Endothelial cell of umbilical vein (primary cell): ENCODE measurements at regions of chr2 and their contacts with region 1.

Region 1: DNA sequence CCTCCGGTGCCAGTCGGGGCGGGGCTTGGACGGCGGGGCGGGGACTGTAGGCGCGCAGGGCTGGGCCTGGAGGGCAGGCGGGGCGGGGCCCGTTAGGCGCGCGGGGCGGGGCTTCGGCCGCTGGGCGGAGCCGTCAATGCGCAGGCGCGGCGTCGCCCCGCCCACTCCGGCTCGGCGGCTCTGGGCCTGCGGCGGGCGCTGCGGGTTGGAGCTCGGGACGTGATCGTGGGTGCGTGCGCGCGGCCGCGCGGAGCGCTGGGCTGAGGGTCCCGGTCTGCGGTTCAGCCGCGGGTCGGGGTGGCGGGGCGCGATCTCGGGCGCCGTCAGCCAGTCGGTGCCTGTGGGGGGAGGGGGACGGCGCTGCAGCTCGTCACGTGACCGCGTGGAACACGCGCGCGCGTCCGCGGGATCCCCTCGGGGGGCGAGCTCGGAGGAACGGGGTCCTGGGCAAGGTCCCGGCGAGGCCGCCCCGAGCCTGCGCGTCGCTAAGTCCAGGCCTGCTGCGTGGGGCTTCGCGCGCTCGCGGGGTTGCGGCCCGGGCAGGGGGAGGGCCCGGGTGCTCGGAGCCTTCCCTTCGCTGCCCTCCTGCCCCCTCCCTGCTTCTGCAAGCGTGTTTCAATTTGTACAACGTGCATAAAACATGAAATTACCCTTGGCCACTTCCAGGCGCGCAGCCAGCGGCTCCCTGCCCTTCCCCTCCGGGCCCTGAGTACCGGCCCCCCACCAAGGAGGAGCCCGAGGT is at the start of gene D2HGDH:
- DNase-seq: peak; percentile 78
- H3K4me3 ChIP-seq: peak within 1 kb of the TSS; percentile 50 to 87 (median 60)
- H3K27ac ChIP-seq: peak within 1 kb of the TSS; percentile 41
- H3K4me1 ChIP-seq: peaks cover 15% of the 10 kb centered on the region
- H3K27me3 ChIP-seq: no peaks in the 10 kb centered on the region
- CTCF ChIP-seq: no peak
- POLR2A ChIP-seq: peak; percentile 98
- total RNA-seq, gene D2HGDH: 22.3 and 27.9 TPM in 2 replicates

Region 2: DNA sequence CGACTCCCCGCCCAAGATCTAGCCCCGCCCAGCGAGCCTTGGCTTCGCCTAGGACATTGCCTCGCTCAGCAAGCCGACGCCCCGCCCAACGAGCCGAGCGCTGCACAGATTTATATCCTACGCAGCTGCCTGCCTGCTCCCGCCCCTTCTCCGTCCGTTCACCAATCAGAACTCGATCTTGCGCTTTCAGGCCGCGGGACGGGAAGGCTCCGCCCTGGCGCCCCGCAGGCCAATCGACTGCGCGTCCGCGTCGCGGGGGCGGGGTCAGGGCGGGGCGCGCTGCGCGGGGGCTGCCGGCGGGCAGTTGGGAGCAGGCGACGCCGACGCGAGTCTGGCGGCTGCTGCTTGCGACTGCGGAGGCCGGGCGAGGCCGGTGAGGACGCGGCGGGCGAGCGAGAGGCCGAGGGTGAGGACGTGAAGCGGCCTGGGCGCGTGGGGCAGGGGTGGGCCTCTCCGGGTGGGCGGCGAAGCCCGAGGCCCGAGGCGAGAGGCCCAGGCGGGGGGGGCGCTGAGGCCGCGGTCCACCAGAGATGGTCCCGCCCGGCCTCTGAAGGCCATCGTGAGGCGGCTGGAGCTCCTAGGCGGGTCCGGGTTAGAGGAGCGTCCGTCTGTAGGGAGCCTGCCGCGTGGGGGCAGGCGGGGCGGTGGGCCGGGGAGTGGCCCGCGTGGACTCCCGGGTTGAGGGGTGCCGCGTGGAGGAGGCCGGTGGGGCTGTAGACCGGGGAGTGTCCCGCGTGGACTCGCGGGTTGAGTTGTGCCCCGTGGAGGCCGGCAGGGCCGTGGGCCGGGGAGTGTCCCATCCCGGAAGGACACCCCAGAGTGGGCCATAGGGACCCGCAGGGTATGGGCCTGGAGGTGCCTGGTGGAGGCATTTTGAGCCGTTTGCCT is 378.4 kb before region 1 on chr2 and contains the start of gene FARP2:
- CTCF ChIA-PET with region 1: no interaction called
- POLR2A ChIA-PET with region 1: no interaction called
- dilution Hi-C with region 1: no loop called
- intact Hi-C with region 1: loop called (anchors 5 kb)
- DNase-seq: peak; percentile 99
- H3K4me3 ChIP-seq: peak within 1 kb of the TSS; percentile 48 to 91 (median 62)
- H3K27ac ChIP-seq: peak within 1 kb of the TSS; percentile 33
- H3K4me1 ChIP-seq: peaks cover 21% of the 10 kb centered on the region
- H3K27me3 ChIP-seq: no peaks in the 10 kb centered on the region
- CTCF ChIP-seq: no peak
- POLR2A ChIP-seq: peak; percentile 89
- total RNA-seq, gene FARP2: 40.6 and 45.3 TPM in 2 replicates

Region 3: DNA sequence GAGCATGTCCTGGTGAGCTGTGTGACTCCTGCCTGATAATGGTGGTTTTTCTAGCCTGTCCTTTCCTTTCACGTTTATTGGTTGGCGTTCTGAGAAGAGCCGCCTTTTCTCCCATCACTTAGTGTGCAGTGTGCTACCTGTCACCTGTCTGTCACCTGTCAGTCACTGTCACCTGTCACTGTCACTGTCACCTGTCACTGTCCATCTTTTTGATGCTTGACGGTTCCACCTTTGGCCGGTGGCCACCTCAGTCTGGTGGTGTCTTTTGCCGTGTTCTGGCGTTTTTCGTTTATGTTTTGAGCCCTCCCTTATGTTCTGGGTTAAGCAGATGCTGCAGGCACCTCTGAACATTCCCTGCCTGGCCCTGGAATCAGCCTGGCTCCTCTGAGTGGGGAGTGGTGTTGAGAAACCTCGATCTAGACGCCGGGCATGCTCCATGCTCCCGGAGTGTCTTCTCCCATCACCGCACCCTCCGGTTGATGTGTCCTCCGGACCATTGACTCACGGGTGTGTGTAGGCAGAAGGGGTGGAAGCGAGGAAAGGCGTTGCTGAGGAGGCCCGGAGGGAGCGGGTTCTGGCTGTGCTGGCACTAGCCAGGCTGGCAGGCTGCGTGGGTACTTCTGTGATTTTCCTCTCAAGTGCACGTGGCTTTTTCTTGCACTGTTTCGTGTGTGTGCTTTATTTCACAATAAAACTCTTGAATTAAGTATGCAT is 68.8 kb before region 1 on chr2:
- CTCF ChIA-PET with region 1: interaction called, 4 read pairs
- POLR2A ChIA-PET with region 1: no interaction called
- dilution Hi-C with region 1: no loop called
- intact Hi-C with region 1: loop called (anchors 1 kb)
- DNase-seq: no peak
- H3K4me3 ChIP-seq: no peak overlapping the region
- H3K27ac ChIP-seq: peak overlapping the region; percentile 21
- H3K4me1 ChIP-seq: peaks cover 20% of the 10 kb centered on the region
- H3K27me3 ChIP-seq: no peaks in the 10 kb centered on the region
- CTCF ChIP-seq: no peak
- POLR2A ChIP-seq: no peak

Region 4: DNA sequence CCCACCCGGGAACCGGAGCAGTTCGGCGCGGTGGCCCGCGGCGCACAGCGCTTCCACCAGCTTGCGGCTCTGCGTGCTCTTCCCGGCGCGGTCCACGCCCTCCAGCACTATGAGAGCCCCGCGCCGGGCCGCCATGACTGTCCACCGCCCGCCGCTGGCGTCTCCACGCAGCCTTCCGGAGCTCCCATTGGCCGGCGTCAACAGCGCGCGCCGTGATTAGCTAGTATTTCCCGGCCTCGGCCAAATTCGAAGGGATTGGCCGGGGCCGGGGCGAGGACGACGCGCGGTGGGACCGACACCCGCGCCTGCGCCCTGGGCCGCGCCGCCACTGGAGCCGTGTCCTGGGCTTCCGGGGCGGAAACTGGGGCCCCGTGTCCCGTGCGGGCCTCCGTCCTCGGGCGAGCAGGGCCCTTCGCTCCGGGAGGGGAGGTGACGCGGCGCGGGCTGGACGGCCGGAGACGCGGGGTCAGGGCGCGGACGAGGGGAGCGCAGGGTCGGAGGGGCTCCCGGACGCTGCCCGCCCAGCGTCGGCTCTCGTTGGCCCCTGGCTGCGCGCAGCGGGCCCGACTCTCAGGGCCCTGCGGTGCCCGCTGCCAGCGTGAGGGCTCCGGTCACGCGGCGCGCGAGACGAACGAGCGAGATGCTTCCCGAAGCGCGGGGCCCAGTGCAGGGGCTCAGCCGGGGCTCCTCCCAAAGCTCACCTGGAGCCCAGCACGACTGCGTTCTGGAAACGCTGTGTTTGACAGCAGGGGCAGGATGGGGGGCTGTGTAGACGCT is 47.8 kb before region 1 on chr2 and contains the start of gene DTYMK:
- CTCF ChIA-PET with region 1: interaction called, 3 read pairs
- POLR2A ChIA-PET with region 1: interaction called, 5 read pairs
- dilution Hi-C with region 1: no loop called
- intact Hi-C with region 1: loop called (anchors 5 kb)
- DNase-seq: peak; percentile 96
- H3K4me3 ChIP-seq: peak within 1 kb of the TSS; percentile 90 to 93 (median 92)
- H3K27ac ChIP-seq: peak within 1 kb of the TSS; percentile 75
- H3K4me1 ChIP-seq: peaks cover 13% of the 10 kb centered on the region
- H3K27me3 ChIP-seq: no peaks in the 10 kb centered on the region
- CTCF ChIP-seq: no peak
- POLR2A ChIP-seq: peak; percentile 91
- total RNA-seq, gene DTYMK: 91.9 and 104 TPM in 2 replicates

Region 5: GRCh38 chr2:241720099-241720498 is 14.5 kb before region 1 on chr2:
- CTCF ChIA-PET with region 1: interaction called, 14 read pairs
- POLR2A ChIA-PET with region 1: no interaction called
- dilution Hi-C with region 1: no loop called
- intact Hi-C with region 1: no loop called
- DNase-seq: no peak
- H3K4me3 ChIP-seq: no peak overlapping the region
- H3K27ac ChIP-seq: no peak overlapping the region
- H3K4me1 ChIP-seq: no peaks in the 10 kb centered on the region
- H3K27me3 ChIP-seq: no peaks in the 10 kb centered on the region
- CTCF ChIP-seq: no peak
- POLR2A ChIP-seq: no peak

Region 6: GRCh38 chr2:241777686-241778627 is 43.3 kb after region 1 on chr2:
- CTCF ChIA-PET with region 1: no interaction called
- POLR2A ChIA-PET with region 1: no interaction called
- dilution Hi-C with region 1: no loop called
- intact Hi-C with region 1: no loop called
- DNase-seq: no peak
- H3K4me3 ChIP-seq: no peak overlapping the region
- H3K27ac ChIP-seq: no peak overlapping the region
- H3K4me1 ChIP-seq: peaks cover 3% of the 10 kb centered on the region
- H3K27me3 ChIP-seq: no peaks in the 10 kb centered on the region
- CTCF ChIP-seq: no peak
- POLR2A ChIP-seq: no peak

Region 7: DNA sequence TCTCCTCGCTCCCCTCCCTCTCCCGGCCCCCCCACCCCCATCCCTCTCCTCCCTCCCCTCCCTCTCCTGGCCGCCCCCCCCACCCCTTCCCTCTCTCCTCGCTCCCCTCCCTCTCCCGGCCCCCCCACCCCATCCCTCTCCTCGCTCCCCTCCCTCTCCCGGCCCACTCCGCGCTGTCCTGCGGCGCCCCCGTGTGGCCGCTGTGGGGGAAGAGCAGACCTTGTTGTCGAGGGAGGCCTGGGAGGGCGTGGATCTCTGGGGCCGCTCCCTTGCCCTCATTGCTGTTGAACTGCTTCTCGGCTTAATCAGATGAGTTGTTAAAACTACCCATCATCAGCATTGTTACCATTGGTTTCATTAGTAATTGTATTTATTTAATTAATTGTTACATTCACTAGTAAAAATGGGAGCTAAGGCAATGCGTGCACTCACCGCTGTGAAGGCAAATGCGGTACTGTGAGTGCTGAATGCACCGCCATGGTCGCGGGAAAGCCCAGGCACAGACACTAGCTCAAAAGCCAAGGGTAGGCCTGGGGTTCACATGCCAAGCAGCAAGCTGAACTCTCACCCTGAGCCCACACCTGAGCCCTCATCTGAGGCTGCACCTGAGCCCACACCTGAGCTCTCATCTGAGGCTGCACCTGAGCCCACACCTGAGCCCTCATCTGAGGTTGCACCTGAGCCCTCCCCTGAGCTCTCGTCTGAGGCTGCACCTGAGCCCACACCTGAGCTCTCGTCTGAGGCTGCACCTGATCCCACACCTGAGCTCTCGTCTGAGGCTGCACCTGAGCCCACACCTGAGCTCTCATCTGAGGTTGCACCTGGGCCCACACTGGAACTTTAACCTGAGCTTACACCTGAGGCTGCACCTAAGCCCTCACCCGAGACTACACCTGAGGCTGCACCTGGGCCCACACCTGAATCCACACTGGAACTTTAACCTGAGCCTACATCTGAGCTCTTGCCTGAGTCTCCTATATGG is 143.6 kb after region 1 on chr2:
- CTCF ChIA-PET with region 1: interaction called, 4 read pairs
- POLR2A ChIA-PET with region 1: no interaction called
- dilution Hi-C with region 1: no loop called
- intact Hi-C with region 1: loop called (anchors 1 kb)
- DNase-seq: peak; percentile 49
- H3K4me3 ChIP-seq: no peak overlapping the region
- H3K27ac ChIP-seq: no peak overlapping the region
- H3K4me1 ChIP-seq: peaks cover 3% of the 10 kb centered on the region
- H3K27me3 ChIP-seq: no peaks in the 10 kb centered on the region
- CTCF ChIP-seq: peak; percentile 48 to 86
- POLR2A ChIP-seq: no peak